IMR-90 (cell line): ENCODE measurements at regions of chr13 and their contacts with region 1.

Region 1: GRCh38 chr13:99916366-99917103 is 55.0 kb downstream of the ZIC5 start:
- DNase-seq: peak; percentile 71
- ATAC-seq: peak; percentile 89
- H3K4me3 ChIP-seq: no peak overlapping the region
- H3K27ac ChIP-seq: no peak overlapping the region
- H3K4me1 ChIP-seq: no peaks in the 10 kb centered on the region
- H3K27me3 ChIP-seq: peaks cover 24% of the 10 kb centered on the region
- CTCF ChIP-seq: peak; percentile 100
- POLR2A ChIP-seq: no peak
- RAD21 ChIP-seq: peak; percentile 79

Region 2: GRCh38 chr13:100530671-100531213 is 614.2 kb after region 1 on chr13:
- CTCF ChIA-PET with region 1: no interaction called
- POLR2A ChIA-PET with region 1: no interaction called
- dilution Hi-C with region 1: no loop called
- in situ Hi-C with region 1: loop called (anchors 10 kb)
- intact Hi-C with region 1: no loop called
- DNase-seq: peak; percentile 33
- ATAC-seq: peak; percentile 72
- H3K4me3 ChIP-seq: no peak overlapping the region
- H3K27ac ChIP-seq: no peak overlapping the region
- H3K4me1 ChIP-seq: peaks cover 2% of the 10 kb centered on the region
- H3K27me3 ChIP-seq: no peaks in the 10 kb centered on the region
- CTCF ChIP-seq: no peak
- POLR2A ChIP-seq: no peak
- RAD21 ChIP-seq: no peak

Region 3: GRCh38 chr13:100542826-100543156 is 626.3 kb after region 1 on chr13:
- CTCF ChIA-PET with region 1: no interaction called
- POLR2A ChIA-PET with region 1: no interaction called
- dilution Hi-C with region 1: no loop called
- in situ Hi-C with region 1: loop called (anchors 10 kb)
- intact Hi-C with region 1: loop called (anchors 1 kb)
- DNase-seq: peak; percentile 64
- ATAC-seq: peak; percentile 67
- H3K4me3 ChIP-seq: no peak overlapping the region
- H3K27ac ChIP-seq: no peak overlapping the region
- H3K4me1 ChIP-seq: peaks cover 7% of the 10 kb centered on the region; the same call in 1 of the 2 replicates
- H3K27me3 ChIP-seq: no peaks in the 10 kb centered on the region
- CTCF ChIP-seq: peak; percentile 59
- POLR2A ChIP-seq: no peak
- RAD21 ChIP-seq: peak; percentile 42